ENCODE measurements at regions of chr11 and their contacts with region 1.

Region 1: GRCh38 chr11:60193687-60194433 is 11.0 kb upstream of the MS4A6A start:
- DNase-seq: peak; percentile 98
- H3K4me3 ChIP-seq: no peak overlapping the region
- H3K27ac ChIP-seq: peak overlapping the region; percentile 92
- H3K4me1 ChIP-seq: peaks cover 37% of the 10 kb centered on the region
- H3K27me3 ChIP-seq: no peaks in the 10 kb centered on the region
- CTCF ChIP-seq: peak; percentile 97
- POLR2A ChIP-seq: peak; percentile 21

Region 2: GRCh38 chr11:60211206-60211605 is 17.3 kb after region 1 on chr11:
- CTCF ChIA-PET with region 1: interaction called, 7 read pairs
- POLR2A ChIA-PET with region 1: no interaction called
- dilution Hi-C with region 1: no loop called
- intact Hi-C with region 1: loop called (anchors 1 kb)
- DNase-seq: no peak
- H3K4me3 ChIP-seq: no peak overlapping the region
- H3K27ac ChIP-seq: no peak overlapping the region
- H3K4me1 ChIP-seq: peaks cover 16% of the 10 kb centered on the region
- H3K27me3 ChIP-seq: no peaks in the 10 kb centered on the region
- CTCF ChIP-seq: no peak
- POLR2A ChIP-seq: no peak

Region 3: DNA sequence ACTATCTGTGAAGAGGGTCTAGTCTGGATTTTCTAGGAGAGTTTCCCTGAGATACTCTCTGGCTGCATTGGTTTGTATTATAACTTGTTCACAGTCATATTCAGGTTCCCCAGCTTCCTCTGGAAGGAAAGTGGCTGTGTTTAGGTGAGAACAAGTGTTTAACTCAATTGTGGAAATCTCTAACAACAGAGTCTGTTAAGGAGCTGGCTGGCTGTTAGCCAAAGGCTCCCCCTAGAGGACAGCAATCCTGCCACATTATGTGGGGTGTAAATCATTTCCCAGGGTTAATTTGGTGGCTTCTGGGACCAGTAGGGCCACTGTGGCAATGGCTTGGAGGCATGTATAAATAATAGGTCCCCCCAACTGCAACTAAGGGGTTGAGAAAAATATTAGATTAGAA is 151.6 kb after region 1 on chr11:
- CTCF ChIA-PET with region 1: no interaction called
- POLR2A ChIA-PET with region 1: no interaction called
- dilution Hi-C with region 1: no loop called
- intact Hi-C with region 1: no loop called
- DNase-seq: peak; percentile 54
- H3K4me3 ChIP-seq: no peak overlapping the region
- H3K27ac ChIP-seq: no peak overlapping the region
- H3K4me1 ChIP-seq: no peaks in the 10 kb centered on the region
- H3K27me3 ChIP-seq: peaks cover 25 to 26% of the 10 kb centered on the region in 2 experiments
- CTCF ChIP-seq: peak; percentile 46 to 50
- POLR2A ChIP-seq: no peak

Measured in endothelial cell of umbilical vein (primary cell).